Mammary epithelial cell (primary cell): ENCODE measurements at regions of chr17 and their contacts with region 1.

Region 1: DNA sequence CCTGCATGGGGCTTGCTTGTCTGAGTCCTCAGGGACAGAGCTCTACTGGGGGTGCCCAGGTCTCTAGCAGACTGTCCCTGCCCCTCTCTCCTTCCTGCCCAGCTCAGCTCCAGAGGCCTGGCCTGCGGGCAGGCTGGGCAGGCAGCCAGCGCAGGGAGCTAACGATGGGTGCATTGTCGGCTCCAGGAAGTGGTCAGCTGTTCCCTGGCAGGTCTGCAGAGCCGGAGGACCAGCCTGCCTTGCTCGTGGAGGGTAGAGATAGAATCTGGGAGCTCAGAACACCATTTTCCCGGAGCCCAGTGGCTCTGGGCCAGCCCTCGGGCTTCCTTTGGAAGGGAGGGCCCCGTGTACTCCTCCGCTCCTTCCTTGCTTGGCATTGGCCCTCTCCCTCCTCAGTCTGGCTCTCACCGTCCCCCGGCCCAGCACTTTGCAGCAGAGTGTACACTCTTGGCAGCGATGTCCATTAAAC is 189.6 kb downstream of the RAB11FIP4 start:
- DNase-seq: peak; percentile 83
- H3K4me3 ChIP-seq: no peak overlapping the region
- H3K27ac ChIP-seq: peak overlapping the region; percentile 55
- H3K4me1 ChIP-seq: peaks cover 39% of the 10 kb centered on the region
- H3K27me3 ChIP-seq: no peaks in the 10 kb centered on the region
- CTCF ChIP-seq: no peak

Region 2: DNA sequence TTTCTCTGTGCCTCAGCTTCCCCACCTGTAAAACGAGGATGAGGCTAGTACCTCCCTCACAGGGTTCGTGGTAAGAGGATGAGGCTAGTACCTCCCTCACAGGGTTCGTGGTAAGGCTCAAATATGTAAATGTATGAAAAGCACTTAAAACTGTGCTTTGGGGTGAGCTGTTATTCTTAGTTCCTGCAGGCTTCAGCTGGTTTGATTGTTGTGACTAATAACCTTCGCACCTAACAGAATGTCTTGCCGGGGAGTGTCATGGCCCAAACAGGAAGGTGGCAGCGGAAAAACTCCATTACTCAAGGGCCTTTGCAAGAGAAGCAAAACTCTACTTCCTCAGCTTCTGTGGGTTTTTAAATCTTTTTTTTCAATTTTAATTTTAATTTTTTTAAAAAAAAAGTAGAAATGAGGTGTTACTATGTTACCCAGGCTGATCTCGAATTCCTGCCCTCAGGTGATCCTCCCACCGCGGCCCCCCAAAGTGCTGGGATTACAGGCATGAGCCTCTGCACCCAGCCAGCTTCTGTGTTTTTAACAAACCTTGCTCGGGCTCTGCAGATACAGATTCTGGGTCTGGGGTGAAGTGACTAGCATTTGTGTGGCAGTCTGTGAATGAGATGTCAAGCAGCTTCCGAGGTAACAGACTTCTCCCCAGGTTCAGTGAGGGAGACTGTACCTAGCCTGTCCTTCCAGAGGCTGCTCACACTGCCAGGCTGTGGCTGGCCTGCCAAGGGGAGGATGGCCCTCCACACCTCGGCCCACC is 86.6 kb before region 1 on chr17:
- CTCF ChIA-PET with region 1: no interaction called
- dilution Hi-C with region 1: loop called (anchors 5 kb)
- in situ Hi-C with region 1: no loop called
- intact Hi-C with region 1: no loop called
- DNase-seq: peak; percentile 67
- H3K4me3 ChIP-seq: no peak overlapping the region
- H3K27ac ChIP-seq: no peak overlapping the region
- H3K4me1 ChIP-seq: peaks cover 13% of the 10 kb centered on the region
- H3K27me3 ChIP-seq: peaks cover 2% of the 10 kb centered on the region
- CTCF ChIP-seq: no peak

Region 3: GRCh38 chr17:31596382-31597323 is 15.6 kb after region 1 on chr17:
- CTCF ChIA-PET with region 1: no interaction called
- dilution Hi-C with region 1: no loop called
- in situ Hi-C with region 1: no loop called
- intact Hi-C with region 1: loop called (anchors 1 kb)
- DNase-seq: peak; percentile 96
- H3K4me3 ChIP-seq: no peak overlapping the region
- H3K27ac ChIP-seq: peak overlapping the region; percentile 46
- H3K4me1 ChIP-seq: peaks cover 39% of the 10 kb centered on the region
- H3K27me3 ChIP-seq: no peaks in the 10 kb centered on the region
- CTCF ChIP-seq: no peak

Region 4: GRCh38 chr17:31754239-31754945 is 173.3 kb after region 1 on chr17:
- CTCF ChIA-PET with region 1: no interaction called
- dilution Hi-C with region 1: no loop called
- in situ Hi-C with region 1: no loop called
- intact Hi-C with region 1: no loop called
- DNase-seq: peak; percentile 79
- H3K4me3 ChIP-seq: no peak overlapping the region
- H3K27ac ChIP-seq: no peak overlapping the region
- H3K4me1 ChIP-seq: peaks cover 4% of the 10 kb centered on the region
- H3K27me3 ChIP-seq: no peaks in the 10 kb centered on the region
- CTCF ChIP-seq: no peak